ENCODE measurements at regions of chr7 and their contacts with region 1.

Region 1: GRCh38 chr7:149869867-149870266 is 3.9 kb upstream of the ATP6V0E2 start:
- DNase-seq: no peak
- ATAC-seq: no peak
- H3K4me3 ChIP-seq: no peak overlapping the region
- H3K27ac ChIP-seq: peak overlapping the region; percentile 58
- H3K4me1 ChIP-seq: peaks cover 50% of the 10 kb centered on the region
- H3K27me3 ChIP-seq: no peaks in the 10 kb centered on the region
- CTCF ChIP-seq: no peak
- EP300 ChIP-seq: no peak
- POLR2A ChIP-seq: no peak
- RAD21 ChIP-seq: no peak

Region 2: GRCh38 chr7:149392450-149392849 is 477.4 kb before region 1 on chr7:
- CTCF ChIA-PET with region 1: no interaction called
- POLR2A ChIA-PET with region 1: no interaction called
- RAD21 ChIA-PET with region 1: no interaction called
- SMC1A ChIA-PET with region 1: no interaction called
- in situ Hi-C with region 1: no loop called
- intact Hi-C with region 1: no loop called
- DNase-seq: no peak
- ATAC-seq: no peak
- H3K4me3 ChIP-seq: no peak overlapping the region
- H3K27ac ChIP-seq: no peak overlapping the region
- H3K4me1 ChIP-seq: no peaks in the 10 kb centered on the region
- H3K27me3 ChIP-seq: peaks cover 0 to 2% of the 10 kb centered on the region in 2 experiments; a peak in 1 of 4 replicates
- CTCF ChIP-seq: no peak
- EP300 ChIP-seq: no peak
- POLR2A ChIP-seq: no peak
- RAD21 ChIP-seq: no peak

Region 3: DNA sequence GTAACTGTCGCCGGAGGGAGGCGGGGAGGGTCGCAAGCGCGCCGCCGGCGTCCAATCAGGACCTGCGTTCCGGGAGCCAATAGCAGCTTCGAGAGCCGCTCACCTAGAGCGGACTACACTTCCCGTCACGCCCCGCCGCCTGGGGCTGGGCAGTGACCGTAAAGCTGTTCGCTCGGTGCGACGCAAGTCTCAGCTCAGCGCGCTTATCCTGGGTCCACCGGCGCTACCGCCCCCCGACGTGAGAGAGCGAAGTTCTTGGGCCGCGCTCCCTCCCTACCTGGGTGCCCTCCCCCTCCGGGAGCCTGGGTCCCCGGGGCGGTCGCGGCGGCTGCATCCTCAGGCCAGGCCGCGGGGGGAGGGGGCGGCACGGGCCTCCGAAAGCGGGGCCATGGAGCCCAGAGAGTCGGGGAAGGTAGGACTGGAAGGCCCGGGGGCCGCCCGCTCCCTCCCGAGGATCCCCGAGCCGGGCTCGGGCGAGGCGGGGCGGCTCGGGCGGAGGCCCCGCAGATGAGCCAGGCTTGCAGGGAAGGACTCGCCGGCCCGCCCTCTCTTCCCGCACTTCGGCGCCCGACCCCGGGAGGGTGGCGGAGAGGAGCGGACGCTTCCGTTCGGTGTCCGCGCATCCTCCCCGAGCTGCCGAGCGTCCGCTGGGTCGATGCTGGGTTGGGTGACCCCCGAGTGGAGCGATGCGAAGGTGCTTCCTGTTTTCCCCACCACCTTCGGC is 31.5 kb before region 1 on chr7 and contains the start of gene ZNF862:
- CTCF ChIA-PET with region 1: no interaction called
- POLR2A ChIA-PET with region 1: interaction called, 7 read pairs
- RAD21 ChIA-PET with region 1: interaction called, 3 read pairs
- SMC1A ChIA-PET with region 1: no interaction called
- in situ Hi-C with region 1: no loop called
- intact Hi-C with region 1: loop called (anchors 2 kb)
- DNase-seq: peak; percentile 90
- ATAC-seq: peak; percentile 99
- H3K4me3 ChIP-seq: peak within 1 kb of the TSS; percentile 93
- H3K27ac ChIP-seq: peak within 1 kb of the TSS; percentile 49
- H3K4me1 ChIP-seq: no peaks in the 10 kb centered on the region; the same call in 1 of the 2 replicates
- H3K27me3 ChIP-seq: peaks cover 0 to 3% of the 10 kb centered on the region in 2 experiments; a peak in 1 of 4 replicates
- CTCF ChIP-seq: no peak
- EP300 ChIP-seq: no peak
- POLR2A ChIP-seq: peak; percentile 91
- RAD21 ChIP-seq: no peak
- polyA plus RNA-seq, gene ZNF862: 0.49 to 1.3 TPM

Measured in GM12878 (cell line).